Activated CD4-positive, alpha-beta memory T cell treated with anti-CD3 and anti-CD28 coated beads, Interleukin-2, amount 10 ng/mL, durations not matched to agents 7 days and 5 days (primary cell): ENCODE measurements at regions of chr3 and their contacts with region 1.

Region 1: DNA sequence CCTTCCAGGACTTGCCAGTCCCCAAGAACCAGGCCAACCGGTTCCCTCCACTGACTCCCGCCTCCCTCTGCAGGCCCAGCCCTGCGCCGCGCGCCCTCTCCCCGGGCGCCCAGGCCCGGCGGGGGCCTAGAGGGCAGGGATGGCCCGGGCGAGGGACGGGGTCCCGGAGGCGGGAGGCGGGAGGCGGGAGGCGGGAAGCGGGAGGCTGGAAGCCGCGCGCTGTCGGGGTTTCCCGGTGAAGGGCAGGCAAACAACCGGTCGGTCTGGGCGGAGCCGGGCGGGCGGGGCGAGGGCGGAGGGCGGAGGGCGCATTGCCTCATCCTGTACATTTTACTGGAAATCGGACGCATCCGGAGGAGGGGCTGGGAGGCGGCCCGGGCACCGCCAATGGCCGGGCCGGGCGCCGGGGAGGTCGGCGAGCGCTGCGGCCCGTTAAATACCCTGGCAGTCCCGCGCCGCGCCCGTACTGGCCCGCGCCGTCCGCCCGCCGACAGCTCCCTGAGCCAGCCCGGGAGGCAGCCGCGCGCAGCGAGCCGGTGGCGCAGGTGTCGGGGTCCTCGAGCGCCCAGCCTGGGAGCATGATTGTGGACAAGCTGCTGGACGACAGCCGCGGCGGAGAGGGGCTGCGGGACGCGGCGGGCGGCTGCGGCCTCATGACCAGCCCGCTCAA is at the start of gene NFKBIZ:
- DNase-seq: peak; percentile 95
- H3K4me3 Mint-ChIP-seq: peak within 1 kb of the TSS; percentile 98
- H3K27ac Mint-ChIP-seq: peak within 1 kb of the TSS; percentile 100
- H3K4me1 Mint-ChIP-seq: peaks cover 45% of the 10 kb centered on the region
- H3K27me3 Mint-ChIP-seq: no peaks in the 10 kb centered on the region
- total RNA-seq, gene NFKBIZ: 76.5 to 81.3 TPM

Region 2: GRCh38 chr3:101724329-101725193 is 124.6 kb before region 1 on chr3 and contains the start of gene CEP97:
- CTCF ChIA-PET with region 1: interaction called, 4 read pairs
- POLR2A ChIA-PET with region 1: interaction called, 12 read pairs
- DNase-seq: peak; percentile 90
- H3K4me3 Mint-ChIP-seq: peak within 1 kb of the TSS; percentile 93
- H3K27ac Mint-ChIP-seq: peak within 1 kb of the TSS; percentile 92
- H3K4me1 Mint-ChIP-seq: peaks cover 55% of the 10 kb centered on the region
- H3K27me3 Mint-ChIP-seq: no peaks in the 10 kb centered on the region
- total RNA-seq, gene CEP97: 22.7 to 25.8 TPM

Region 3: DNA sequence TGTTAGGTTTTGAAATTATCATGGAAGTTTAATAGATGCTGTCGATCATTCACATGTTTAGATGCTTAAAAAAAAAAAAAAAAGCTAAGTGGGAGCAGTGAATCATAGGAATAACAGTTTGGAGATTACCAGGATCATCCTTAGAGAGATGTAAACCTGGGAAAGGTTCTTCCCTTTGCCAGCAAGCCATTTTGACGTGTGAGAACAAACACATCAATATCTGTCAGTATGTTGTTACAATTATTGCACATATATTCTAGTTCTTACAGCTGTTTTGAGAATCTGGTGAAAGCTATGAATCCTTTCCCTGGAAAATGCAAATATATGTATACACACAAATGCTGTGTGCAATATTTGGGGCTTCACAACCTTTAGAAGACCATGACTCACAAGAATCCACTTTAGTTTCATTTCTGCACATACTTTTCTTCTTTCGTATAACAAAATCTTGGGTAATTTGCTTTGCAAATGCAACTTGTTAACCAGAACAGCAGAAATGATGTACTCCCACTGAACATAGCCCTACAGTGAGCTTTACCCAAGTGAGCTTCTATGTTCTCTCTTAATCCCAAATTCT is 12.1 kb after region 1 on chr3:
- CTCF ChIA-PET with region 1: no interaction called
- POLR2A ChIA-PET with region 1: interaction called, 22 read pairs
- DNase-seq: no peak
- H3K4me3 Mint-ChIP-seq: no peak overlapping the region
- H3K27ac Mint-ChIP-seq: peak overlapping the region; percentile 5
- H3K4me1 Mint-ChIP-seq: peaks cover 42% of the 10 kb centered on the region
- H3K27me3 Mint-ChIP-seq: no peaks in the 10 kb centered on the region

Region 4: GRCh38 chr3:102057781-102058421 is 208.7 kb after region 1 on chr3:
- CTCF ChIA-PET with region 1: no interaction called
- POLR2A ChIA-PET with region 1: interaction called, 15 read pairs
- DNase-seq: no peak
- H3K4me3 Mint-ChIP-seq: no peak overlapping the region
- H3K27ac Mint-ChIP-seq: peak overlapping the region; percentile 63
- H3K4me1 Mint-ChIP-seq: peaks cover 34% of the 10 kb centered on the region
- H3K27me3 Mint-ChIP-seq: no peaks in the 10 kb centered on the region

Region 5: GRCh38 chr3:102113411-102114041 is 264.3 kb after region 1 on chr3:
- CTCF ChIA-PET with region 1: interaction called, 4 read pairs
- POLR2A ChIA-PET with region 1: interaction called, 12 read pairs
- DNase-seq: no peak
- H3K4me3 Mint-ChIP-seq: no peak overlapping the region
- H3K27ac Mint-ChIP-seq: peak overlapping the region; percentile 62
- H3K4me1 Mint-ChIP-seq: peaks cover 32% of the 10 kb centered on the region
- H3K27me3 Mint-ChIP-seq: no peaks in the 10 kb centered on the region